Ascending aorta (tissue), 2 donors: ENCODE measurements at regions of chr12 and their contacts with region 1.

Region 1: DNA sequence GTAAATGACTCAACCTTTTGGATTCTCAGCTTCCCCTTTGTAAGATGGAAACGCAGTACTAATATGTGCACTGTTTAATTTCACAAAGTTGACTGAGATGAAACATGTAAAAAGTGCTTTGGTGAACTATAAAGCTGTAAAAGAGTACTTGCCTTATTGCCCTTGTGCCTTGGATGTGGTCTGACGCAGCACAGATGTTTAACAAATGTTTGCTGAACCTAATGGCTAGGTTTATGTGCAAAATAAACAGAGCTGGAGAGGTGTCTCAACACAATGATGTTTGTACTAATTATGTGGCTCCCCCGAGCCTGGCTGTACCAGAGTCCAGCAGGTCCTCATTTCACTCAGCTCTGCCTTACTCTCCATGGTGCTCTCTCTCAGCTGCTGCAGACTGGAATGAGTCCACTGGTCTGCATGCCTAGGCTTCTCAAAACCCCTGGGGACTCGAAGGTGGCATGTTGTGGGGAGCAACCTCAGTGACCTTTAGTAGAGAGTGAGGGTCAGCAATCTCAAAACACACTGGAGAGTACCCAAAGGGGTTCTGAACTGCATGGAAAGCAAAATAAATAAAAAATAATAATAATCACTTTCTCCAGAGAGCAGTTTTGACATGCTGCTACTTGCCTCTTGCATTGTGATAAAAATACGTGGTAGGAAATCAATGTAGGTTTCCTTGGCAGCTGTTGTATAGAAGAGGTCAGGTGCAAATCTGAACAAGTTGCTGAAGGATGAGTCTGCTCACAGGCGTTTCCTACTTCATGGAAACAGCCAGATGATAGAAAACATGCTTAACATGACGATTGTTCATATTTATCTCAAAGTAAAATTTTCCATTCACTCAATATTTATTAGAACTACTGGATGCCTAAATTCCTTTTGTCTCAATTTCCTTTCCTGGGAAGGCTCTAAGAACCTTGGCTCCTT is 8.5 kb upstream of the AMIGO2 start:
- DNase-seq: no peak
- H3K4me3 ChIP-seq: no peak overlapping the region
- H3K27ac ChIP-seq: peak overlapping the region; percentile 81 to 99
- H3K4me1 ChIP-seq: peaks cover 3 to 42% of the 10 kb centered on the region in 2 donors
- H3K27me3 ChIP-seq: no peaks in the 10 kb centered on the region
- CTCF ChIP-seq: no peak

Region 2: GRCh38 chr12:46884362-46884761 is 203.9 kb before region 1 on chr12:
- intact Hi-C with region 1: no loop called
- DNase-seq: no peak
- H3K4me3 ChIP-seq: no peak overlapping the region
- H3K27ac ChIP-seq: no peak overlapping the region
- H3K4me1 ChIP-seq: no peaks in the 10 kb centered on the region
- H3K27me3 ChIP-seq: no peaks in the 10 kb centered on the region
- CTCF ChIP-seq: no peak

Region 3: GRCh38 chr12:47102845-47103651 is 14.8 kb after region 1 on chr12:
- intact Hi-C with region 1: loop called (anchors 2 kb)
- DNase-seq: no peak
- H3K4me3 ChIP-seq: peak overlapping the region in 1 of 2 donors; percentile 10
- H3K27ac ChIP-seq: peak overlapping the region; percentile 75 to 87
- H3K4me1 ChIP-seq: peaks cover 0 to 34% of the 10 kb centered on the region in 2 donors
- H3K27me3 ChIP-seq: no peaks in the 10 kb centered on the region
- CTCF ChIP-seq: no peak

Region 4: GRCh38 chr12:47114481-47114892 is 26.2 kb after region 1 on chr12:
- intact Hi-C with region 1: no loop called
- DNase-seq: no peak
- H3K4me3 ChIP-seq: no peak overlapping the region
- H3K27ac ChIP-seq: no peak overlapping the region
- H3K4me1 ChIP-seq: peaks cover 0 to 3% of the 10 kb centered on the region in 2 donors
- H3K27me3 ChIP-seq: no peaks in the 10 kb centered on the region
- CTCF ChIP-seq: no peak

Region 5: DNA sequence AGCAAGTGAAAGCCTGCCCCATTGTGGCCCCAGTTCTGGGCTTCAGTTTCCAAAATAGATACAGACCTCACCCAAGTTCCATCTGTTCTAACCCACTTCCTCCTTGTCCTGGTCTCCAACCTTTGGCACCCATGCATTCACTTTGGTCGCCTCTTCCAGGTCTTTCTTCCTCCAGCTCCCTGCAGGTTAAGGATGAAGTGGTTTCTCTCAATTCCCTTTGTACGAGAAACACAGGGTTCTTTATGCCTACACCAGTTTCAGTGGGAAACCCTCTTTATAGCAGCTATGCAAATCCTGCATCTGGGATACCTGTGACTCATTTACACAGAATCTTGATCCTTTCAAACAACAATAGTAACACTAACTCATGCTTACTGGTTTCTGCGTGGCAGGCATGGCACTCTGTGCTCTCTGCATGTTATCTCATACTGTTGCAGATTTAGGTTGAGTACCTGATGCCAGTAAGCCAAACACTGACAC is 102.0 kb after region 1 on chr12:
- intact Hi-C with region 1: no loop called
- DNase-seq: no peak
- H3K4me3 ChIP-seq: no peak overlapping the region
- H3K27ac ChIP-seq: no peak overlapping the region
- H3K4me1 ChIP-seq: peaks cover 0 to 5% of the 10 kb centered on the region in 2 donors
- H3K27me3 ChIP-seq: no peaks in the 10 kb centered on the region
- CTCF ChIP-seq: no peak

Region 6: GRCh38 chr12:47302111-47302671 is 213.9 kb after region 1 on chr12:
- intact Hi-C with region 1: no loop called
- DNase-seq: no peak
- H3K4me3 ChIP-seq: no peak overlapping the region
- H3K27ac ChIP-seq: no peak overlapping the region
- H3K4me1 ChIP-seq: no peaks in the 10 kb centered on the region
- H3K27me3 ChIP-seq: no peaks in the 10 kb centered on the region
- CTCF ChIP-seq: no peak